Dorsolateral prefrontal cortex (tissue), 120 donors: ENCODE measurements at regions of chr14 and their contacts with region 1.

Region 1: GRCh38 chr14:64540208-64541157 is at the start of gene HSPA2:
- DNase-seq: peak; percentile 93 to 99 (median 99)
- H3K4me3 ChIP-seq: peak within 1 kb of the TSS; percentile 47 to 82 (median 70)
- H3K27ac ChIP-seq: peak within 1 kb of the TSS in 56 of 59 donors; percentile 33 to 91 (median 82)
- H3K27me3 ChIP-seq: peaks cover 0 to 15% (median 0%) of the 10 kb centered on the region in 45 donors
- CTCF ChIP-seq: peak; percentile 47 to 98 (median 88)
- total RNA-seq, gene HSPA2: 15.2 to 536 (median 124) TPM

Region 2: DNA sequence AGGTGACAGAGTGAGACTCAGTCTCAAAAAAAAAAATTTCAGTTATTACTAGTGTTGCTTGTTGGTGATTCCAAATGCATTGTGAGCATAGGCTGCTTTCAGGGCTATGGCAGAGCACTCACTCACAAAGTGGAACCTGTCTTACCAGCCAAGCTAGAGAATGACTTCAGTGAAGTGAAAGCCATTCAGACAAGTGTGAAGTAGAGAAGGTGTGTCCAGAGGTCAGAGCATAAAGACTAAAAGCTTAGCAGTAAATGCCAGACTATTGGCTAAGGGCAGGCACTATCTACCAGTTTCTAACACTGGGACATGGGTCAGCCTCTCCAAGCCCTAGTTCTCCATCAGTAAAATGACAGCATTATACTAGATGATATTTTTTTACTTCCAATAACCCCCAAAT is 21.9 kb after region 1 on chr14:
- intact Hi-C with region 1: no loop called
- DNase-seq: no peak
- H3K4me3 ChIP-seq: no peak overlapping the region
- H3K27ac ChIP-seq: peak overlapping the region in 30 of 59 donors; percentile 14 to 99 (median 92)
- H3K27me3 ChIP-seq: no peaks in the 10 kb centered on the region
- CTCF ChIP-seq: no peak

Region 3: GRCh38 chr14:64573109-64573508 is 32.6 kb after region 1 on chr14:
- intact Hi-C with region 1: loop called (anchors 2 kb)
- DNase-seq: peak in 1 of 10 donors; percentile 49
- H3K4me3 ChIP-seq: peak overlapping the region in 24 of 59 donors; percentile 2 to 37 (median 18)
- H3K27ac ChIP-seq: peak overlapping the region; percentile 54 to 99 (median 93)
- H3K27me3 ChIP-seq: no peaks in the 10 kb centered on the region
- CTCF ChIP-seq: peak in 4 of 56 donors; percentile 8 to 15 (median 9)

Region 4: GRCh38 chr14:64612021-64612380 is 71.5 kb after region 1 on chr14:
- intact Hi-C with region 1: no loop called
- DNase-seq: no peak
- H3K4me3 ChIP-seq: no peak overlapping the region
- H3K27ac ChIP-seq: peak overlapping the region in 33 of 59 donors; percentile 2 to 76 (median 41)
- H3K27me3 ChIP-seq: no peaks in the 10 kb centered on the region
- CTCF ChIP-seq: no peak

Region 5: GRCh38 chr14:64636208-64636979 is 95.9 kb after region 1 on chr14:
- intact Hi-C with region 1: loop called (anchors 1 kb)
- DNase-seq: peak; percentile 60 to 84 (median 70)
- H3K4me3 ChIP-seq: peak overlapping the region in 26 of 59 donors; percentile 2 to 50 (median 17)
- H3K27ac ChIP-seq: peak overlapping the region in 43 of 59 donors; percentile 2 to 80 (median 46)
- H3K27me3 ChIP-seq: no peaks in the 10 kb centered on the region
- CTCF ChIP-seq: peak; percentile 87 to 100 (median 96)

Region 6: DNA sequence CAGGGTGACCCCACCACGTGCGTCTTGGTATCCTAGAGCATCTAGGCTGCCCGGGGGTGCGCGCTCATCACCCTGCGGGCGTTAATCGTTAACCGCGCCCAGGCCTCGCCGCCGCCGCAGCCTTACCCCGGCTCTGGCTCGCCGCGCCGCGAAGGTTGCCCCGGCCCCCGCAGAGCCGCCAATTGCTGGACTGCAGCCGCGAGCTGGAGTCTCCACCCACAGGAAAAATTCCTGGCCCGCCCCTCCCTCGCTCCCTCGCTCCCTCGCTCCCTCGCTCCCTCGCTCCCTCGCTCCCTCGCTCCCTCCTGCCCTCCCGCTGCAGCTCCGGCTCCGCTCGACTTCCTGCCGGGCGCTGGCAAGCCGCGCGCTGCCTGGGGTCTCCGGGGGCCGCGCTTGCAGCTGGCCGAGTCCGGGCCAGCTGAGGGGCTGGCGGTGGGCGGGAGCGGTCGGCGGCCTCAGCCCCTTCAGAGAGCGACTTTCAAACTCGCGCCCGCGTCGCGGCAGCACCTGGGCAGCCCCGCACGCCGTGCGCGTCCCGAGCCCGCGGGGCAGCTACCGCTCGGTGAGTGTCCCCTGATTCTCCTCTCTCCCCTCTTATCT is 163.8 kb after region 1 on chr14 and contains the start of gene PLEKHG3:
- intact Hi-C with region 1: loop called in 1 of 2 experiments (anchors 5 kb)
- DNase-seq: peak; percentile 67 to 90 (median 80)
- H3K4me3 ChIP-seq: peak within 1 kb of the TSS; percentile 45 to 96 (median 85)
- H3K27ac ChIP-seq: peak within 1 kb of the TSS; percentile 84 to 99 (median 96)
- H3K27me3 ChIP-seq: no peaks in the 10 kb centered on the region
- CTCF ChIP-seq: peak in 41 of 56 donors; percentile 5 to 52 (median 23)
- total RNA-seq, gene PLEKHG3: 27.1 to 361 (median 85.0) TPM

Region 7: DNA sequence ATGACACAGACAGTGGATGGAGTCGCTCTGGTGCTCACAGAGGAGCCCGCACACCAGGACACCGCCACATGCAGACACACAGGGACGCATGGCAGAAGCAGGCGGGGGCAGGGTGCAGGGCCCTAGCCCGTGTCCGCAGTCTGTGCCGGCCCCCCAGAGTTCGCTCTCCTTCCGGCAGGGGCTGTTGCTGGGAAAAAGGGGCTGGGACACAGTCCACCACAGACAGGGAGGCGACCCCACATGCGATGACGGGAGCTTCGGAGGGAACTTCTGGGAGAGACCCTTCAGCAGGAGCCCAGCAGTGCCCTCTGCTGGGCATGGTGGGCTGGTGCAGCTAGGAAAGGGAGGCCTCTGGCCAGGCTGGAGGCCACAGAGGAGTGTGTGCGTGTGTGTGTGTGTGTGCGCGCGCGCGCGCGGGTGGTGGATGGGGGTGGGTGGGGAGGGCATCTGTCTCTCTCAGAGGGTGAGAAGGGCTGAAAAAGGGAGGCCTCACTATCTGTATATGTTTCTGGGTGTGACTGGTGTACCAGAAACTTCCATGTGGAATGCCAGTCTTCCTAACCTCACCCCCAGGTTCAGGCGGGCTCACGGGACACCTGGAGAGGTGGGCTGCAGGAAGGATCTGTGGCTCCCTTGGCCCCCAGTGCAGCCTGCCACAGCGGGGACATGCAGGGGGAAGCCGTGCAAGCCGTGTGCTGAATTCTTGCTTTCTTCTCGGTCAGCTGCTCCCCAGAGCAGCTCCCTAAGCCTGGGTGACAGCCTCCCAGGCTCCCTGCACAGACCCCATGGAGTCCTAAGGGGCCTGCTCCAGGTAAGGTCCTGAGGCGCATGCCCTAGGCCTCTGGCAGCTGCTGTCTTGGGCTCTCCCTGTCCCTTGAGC is 224.4 kb after region 1 on chr14:
- intact Hi-C with region 1: loop called (anchors 10 kb)
- DNase-seq: peak; percentile 51 to 86 (median 67)
- H3K4me3 ChIP-seq: peak overlapping the region in 58 of 59 donors; percentile 8 to 66 (median 44)
- H3K27ac ChIP-seq: peak overlapping the region in 54 of 59 donors; percentile 34 to 93 (median 82)
- H3K27me3 ChIP-seq: no peaks in the 10 kb centered on the region
- CTCF ChIP-seq: peak; percentile 65 to 97 (median 89)